ENCODE measurements at regions of chr2 and their contacts with region 1.

Region 1: DNA sequence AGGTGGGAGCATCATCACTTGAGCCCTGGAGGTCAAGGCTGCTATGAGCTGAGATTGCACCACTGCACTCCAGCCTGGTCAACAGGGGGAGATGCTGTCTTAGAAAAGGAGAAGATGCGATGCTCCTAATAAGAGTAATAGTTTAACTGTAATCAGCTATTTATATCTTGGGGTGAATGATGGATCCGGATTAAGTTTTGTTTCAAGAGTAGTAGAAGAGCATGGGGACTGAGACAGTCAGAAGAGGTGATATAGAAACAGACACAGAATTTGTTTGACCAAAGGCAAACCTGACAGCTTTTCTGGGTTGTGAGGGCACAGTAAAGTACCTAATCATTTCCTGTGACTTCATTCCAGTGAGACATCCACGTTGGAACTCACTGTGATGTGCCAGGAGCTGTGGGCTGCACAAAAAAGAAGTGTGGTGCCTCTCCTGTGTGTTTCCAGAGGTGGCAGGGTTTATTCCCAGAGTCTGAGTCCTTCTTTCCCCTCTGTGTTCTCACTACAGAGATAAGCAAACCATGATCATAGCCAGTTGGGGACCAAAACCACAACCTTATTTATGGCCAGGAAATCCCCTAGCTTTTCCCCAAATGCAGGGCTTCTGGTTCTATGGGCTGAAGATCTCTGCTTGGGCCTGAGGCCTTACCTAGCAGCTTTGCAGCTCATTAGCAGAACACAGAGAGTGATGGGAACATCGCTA is 113.7 kb downstream of the XRCC5 start:
- DNase-seq: peak; percentile 54 to 85 (median 83)
- H3K4me3 ChIP-seq: peak overlapping the region in 3 of 7 experiments; percentile 12 to 16 (median 14)
- H3K27ac ChIP-seq: peak overlapping the region in 1 of 2 experiments; percentile 16
- H3K4me1 ChIP-seq: peaks cover 29 to 66% (median 61%) of the 10 kb centered on the region in 4 experiments
- H3K27me3 ChIP-seq: no peaks in the 10 kb centered on the region

Region 2: GRCh38 chr2:216130346-216130971 is 92.3 kb before region 1 on chr2:
- CTCF ChIA-PET with region 1: no interaction called
- POLR2A ChIA-PET with region 1: no interaction called
- DNase-seq: no peak
- H3K4me3 ChIP-seq: no peak overlapping the region
- H3K27ac ChIP-seq: no peak overlapping the region
- H3K4me1 ChIP-seq: no peaks in the 10 kb centered on the region
- H3K27me3 ChIP-seq: no peaks in the 10 kb centered on the region

Region 3: GRCh38 chr2:216210701-216211540 is 11.9 kb before region 1 on chr2:
- CTCF ChIA-PET with region 1: interaction called, 23 read pairs
- POLR2A ChIA-PET with region 1: no interaction called
- DNase-seq: peak in 2 of 3 donors; percentile 60 to 63
- H3K4me3 ChIP-seq: no peak overlapping the region
- H3K27ac ChIP-seq: no peak overlapping the region
- H3K4me1 ChIP-seq: peaks cover 7 to 23% (median 22%) of the 10 kb centered on the region in 4 experiments
- H3K27me3 ChIP-seq: no peaks in the 10 kb centered on the region

Region 4: GRCh38 chr2:216235462-216235861 is 12.7 kb after region 1 on chr2:
- CTCF ChIA-PET with region 1: no interaction called
- POLR2A ChIA-PET with region 1: no interaction called
- DNase-seq: no peak
- H3K4me3 ChIP-seq: no peak overlapping the region
- H3K27ac ChIP-seq: no peak overlapping the region
- H3K4me1 ChIP-seq: no peaks in the 10 kb centered on the region
- H3K27me3 ChIP-seq: no peaks in the 10 kb centered on the region

Measured in common myeloid progenitor, CD34-positive (primary cell).